Heart right ventricle (tissue), 16 donors: ENCODE measurements at regions of chr2 and their contacts with region 1.

Region 1: GRCh38 chr2:55907686-55908085 is 15.9 kb downstream of the EFEMP1 start:
- DNase-seq: no peak
- ATAC-seq: no peak
- H3K4me3 ChIP-seq: no peak overlapping the region
- H3K27ac ChIP-seq: no peak overlapping the region
- H3K4me1 ChIP-seq: peaks cover 0 to 5% (median 0%) of the 10 kb centered on the region in 9 donors
- H3K27me3 ChIP-seq: peaks cover 0 to 8% (median 0%) of the 10 kb centered on the region in 7 donors
- CTCF ChIP-seq: no peak

Region 2: GRCh38 chr2:55550368-55551102 is 357.2 kb before region 1 on chr2:
- intact Hi-C with region 1: no loop called
- DNase-seq: no peak
- ATAC-seq: no peak
- H3K4me3 ChIP-seq: no peak overlapping the region
- H3K27ac ChIP-seq: no peak overlapping the region
- H3K4me1 ChIP-seq: peaks cover 0 to 6% (median 0%) of the 10 kb centered on the region in 9 donors
- H3K27me3 ChIP-seq: no peaks in the 10 kb centered on the region
- CTCF ChIP-seq: no peak

Region 3: DNA sequence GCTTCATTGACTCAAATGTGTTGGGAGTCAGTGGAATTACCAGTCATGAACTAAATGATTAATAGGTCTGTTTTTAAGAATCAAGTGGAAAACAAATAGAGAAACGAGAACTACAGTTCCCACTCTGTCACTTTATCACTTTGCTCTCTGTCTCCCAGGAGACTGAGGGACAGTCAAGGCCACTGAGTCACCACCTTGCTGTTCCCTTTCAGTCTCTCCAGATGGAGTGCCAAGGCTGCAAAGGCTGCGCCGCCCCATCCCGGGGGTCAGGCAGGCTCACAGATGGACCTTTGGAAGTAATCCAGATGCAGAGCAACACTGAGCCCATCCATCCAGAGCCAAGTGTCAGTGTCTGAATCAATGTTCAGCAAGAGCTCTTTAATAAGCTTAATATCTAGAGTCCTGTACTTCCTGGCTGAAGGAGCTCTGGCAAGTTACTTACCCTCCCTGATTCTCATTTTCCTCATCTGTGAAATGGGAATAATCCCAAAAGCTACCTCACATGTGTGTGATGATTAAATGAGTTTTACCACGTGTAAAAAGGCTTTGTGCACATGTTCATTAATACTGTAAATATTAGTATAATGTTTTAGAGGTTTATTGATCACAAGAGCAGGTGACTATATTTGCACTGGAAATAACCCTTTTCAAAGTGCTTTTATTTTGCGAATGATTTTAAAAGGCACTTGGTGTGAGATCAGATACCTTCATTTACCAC is 58.9 kb after region 1 on chr2:
- intact Hi-C with region 1: loop called in 1 of 10 experiments (anchors 2 kb)
- DNase-seq: peak; percentile 19 to 31
- ATAC-seq: peak in 7 of 8 donors; percentile 43 to 83 (median 70)
- H3K4me3 ChIP-seq: no peak overlapping the region
- H3K27ac ChIP-seq: peak overlapping the region in 5 of 10 donors; percentile 36 to 67 (median 53)
- H3K4me1 ChIP-seq: peaks cover 0 to 17% (median 3%) of the 10 kb centered on the region in 9 donors
- H3K27me3 ChIP-seq: peaks cover 0 to 4% (median 0%) of the 10 kb centered on the region in 7 donors
- CTCF ChIP-seq: no peak

Region 4: GRCh38 chr2:56132138-56132537 is 224.5 kb after region 1 on chr2:
- intact Hi-C with region 1: no loop called
- DNase-seq: no peak
- ATAC-seq: no peak
- H3K4me3 ChIP-seq: no peak overlapping the region
- H3K27ac ChIP-seq: no peak overlapping the region
- H3K4me1 ChIP-seq: peaks cover 0 to 7% (median 0%) of the 10 kb centered on the region in 9 donors
- H3K27me3 ChIP-seq: peaks cover 0 to 4% (median 0%) of the 10 kb centered on the region in 7 donors
- CTCF ChIP-seq: peak in 8 of 9 donors; percentile 16 to 70 (median 52)